ENCODE measurements at regions of chr1 and their contacts with region 1.

Region 1: GRCh38 chr1:93304716-93305138 is 41.0 kb upstream of the DR1 start:
- DNase-seq: peak; percentile 60
- H3K4me3 Mint-ChIP-seq: no peak overlapping the region
- H3K27ac Mint-ChIP-seq: no peak overlapping the region
- H3K4me1 Mint-ChIP-seq: no peaks in the 10 kb centered on the region
- H3K27me3 Mint-ChIP-seq: no peaks in the 10 kb centered on the region

Region 2: GRCh38 chr1:93317207-93317606 is 12.5 kb after region 1 on chr1:
- CTCF ChIA-PET with region 1: interaction called, 19 read pairs
- DNase-seq: no peak
- H3K4me3 Mint-ChIP-seq: no peak overlapping the region
- H3K27ac Mint-ChIP-seq: no peak overlapping the region
- H3K4me1 Mint-ChIP-seq: no peaks in the 10 kb centered on the region
- H3K27me3 Mint-ChIP-seq: no peaks in the 10 kb centered on the region

Region 3: GRCh38 chr1:93345633-93346420 is 41.1 kb after region 1 on chr1 and contains the start of gene DR1:
- CTCF ChIA-PET with region 1: interaction called, 16 read pairs
- DNase-seq: peak; percentile 94
- H3K4me3 Mint-ChIP-seq: peak within 1 kb of the TSS; percentile 94
- H3K27ac Mint-ChIP-seq: peak within 1 kb of the TSS; percentile 99
- H3K4me1 Mint-ChIP-seq: peaks cover 22% of the 10 kb centered on the region
- H3K27me3 Mint-ChIP-seq: no peaks in the 10 kb centered on the region

Region 4: DNA sequence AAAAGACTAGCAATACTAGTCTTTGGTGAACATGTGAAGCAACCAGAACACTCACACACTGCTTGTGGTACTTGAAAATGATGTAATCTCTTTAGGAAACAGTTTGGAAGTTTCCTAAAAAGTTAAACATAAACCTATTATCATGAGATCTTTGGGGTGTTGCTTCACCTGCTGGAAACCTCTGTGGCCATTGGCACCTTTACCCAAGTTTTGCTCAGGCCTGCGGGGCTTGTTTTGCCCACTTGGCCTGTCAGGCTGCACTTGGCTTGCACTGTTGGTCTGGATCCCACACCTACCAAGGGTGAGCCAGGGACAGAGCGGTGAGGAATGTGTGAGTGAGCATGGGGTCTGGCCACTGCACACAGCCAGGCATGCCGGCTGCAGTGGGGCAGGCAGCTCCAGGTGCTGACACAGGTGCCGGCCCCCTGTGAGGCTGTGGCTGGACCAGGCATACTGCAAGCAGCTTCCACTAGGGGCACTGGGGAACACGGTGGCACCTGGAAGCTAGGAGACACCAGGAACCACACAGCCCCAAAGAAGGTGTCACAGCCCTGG is 128.8 kb after region 1 on chr1:
- CTCF ChIA-PET with region 1: interaction called, 13 read pairs
- DNase-seq: no peak
- H3K4me3 Mint-ChIP-seq: no peak overlapping the region
- H3K27ac Mint-ChIP-seq: no peak overlapping the region
- H3K4me1 Mint-ChIP-seq: no peaks in the 10 kb centered on the region
- H3K27me3 Mint-ChIP-seq: peaks cover 48% of the 10 kb centered on the region

Region 5: GRCh38 chr1:93629099-93630059 is 324.7 kb after region 1 on chr1:
- CTCF ChIA-PET with region 1: interaction called, 15 read pairs
- DNase-seq: peak; percentile 56
- H3K4me3 Mint-ChIP-seq: no peak overlapping the region
- H3K27ac Mint-ChIP-seq: no peak overlapping the region
- H3K4me1 Mint-ChIP-seq: no peaks in the 10 kb centered on the region
- H3K27me3 Mint-ChIP-seq: peaks cover 5% of the 10 kb centered on the region

Region 6: GRCh38 chr1:93814059-93814794 is 509.5 kb after region 1 on chr1:
- CTCF ChIA-PET with region 1: interaction called, 22 read pairs
- DNase-seq: peak; percentile 72
- H3K4me3 Mint-ChIP-seq: no peak overlapping the region
- H3K27ac Mint-ChIP-seq: no peak overlapping the region
- H3K4me1 Mint-ChIP-seq: peaks cover 21% of the 10 kb centered on the region
- H3K27me3 Mint-ChIP-seq: no peaks in the 10 kb centered on the region

Region 7: GRCh38 chr1:93846211-93846991 is 541.7 kb after region 1 on chr1:
- CTCF ChIA-PET with region 1: interaction called, 21 read pairs
- DNase-seq: peak; percentile 86
- H3K4me3 Mint-ChIP-seq: peak overlapping the region; percentile 88
- H3K27ac Mint-ChIP-seq: peak overlapping the region; percentile 96
- H3K4me1 Mint-ChIP-seq: peaks cover 31% of the 10 kb centered on the region
- H3K27me3 Mint-ChIP-seq: peaks cover 19% of the 10 kb centered on the region